IMR-90 (cell line): ENCODE measurements at regions of chr2 and their contacts with region 1.

Region 1: GRCh38 chr2:127649684-127650040 is 3.7 kb downstream of the GPR17 start:
- DNase-seq: peak; percentile 77
- ATAC-seq: peak; percentile 88
- H3K4me3 ChIP-seq: no peak overlapping the region
- H3K27ac ChIP-seq: no peak overlapping the region
- H3K4me1 ChIP-seq: peaks cover 7% of the 10 kb centered on the region; the same call in 1 of the 2 replicates
- H3K27me3 ChIP-seq: no peaks in the 10 kb centered on the region
- CTCF ChIP-seq: peak; percentile 76
- POLR2A ChIP-seq: no peak
- RAD21 ChIP-seq: peak; percentile 75

Region 2: GRCh38 chr2:127324635-127325034 is 325.0 kb before region 1 on chr2:
- CTCF ChIA-PET with region 1: no interaction called
- POLR2A ChIA-PET with region 1: no interaction called
- dilution Hi-C with region 1: no loop called
- in situ Hi-C with region 1: no loop called
- intact Hi-C with region 1: loop called (anchors 2 kb)
- DNase-seq: peak; percentile 68
- ATAC-seq: peak; percentile 28; the same call in 1 of the 2 replicates
- H3K4me3 ChIP-seq: no peak overlapping the region
- H3K27ac ChIP-seq: no peak overlapping the region
- H3K4me1 ChIP-seq: peaks cover 3% of the 10 kb centered on the region
- H3K27me3 ChIP-seq: no peaks in the 10 kb centered on the region
- CTCF ChIP-seq: peak; percentile 70
- POLR2A ChIP-seq: no peak
- RAD21 ChIP-seq: peak; percentile 71

Region 3: GRCh38 chr2:127498386-127498785 is 151.3 kb before region 1 on chr2:
- CTCF ChIA-PET with region 1: no interaction called
- POLR2A ChIA-PET with region 1: no interaction called
- dilution Hi-C with region 1: no loop called
- in situ Hi-C with region 1: no loop called
- intact Hi-C with region 1: loop called (anchors 5 kb)
- DNase-seq: peak; percentile 81
- ATAC-seq: peak; percentile 93
- H3K4me3 ChIP-seq: no peak overlapping the region
- H3K27ac ChIP-seq: peak overlapping the region; percentile 37; the same call in 1 of the 2 replicates
- H3K4me1 ChIP-seq: peaks cover 2% of the 10 kb centered on the region; the same call in 1 of the 2 replicates
- H3K27me3 ChIP-seq: no peaks in the 10 kb centered on the region
- CTCF ChIP-seq: no peak
- POLR2A ChIP-seq: no peak
- RAD21 ChIP-seq: no peak

Region 4: DNA sequence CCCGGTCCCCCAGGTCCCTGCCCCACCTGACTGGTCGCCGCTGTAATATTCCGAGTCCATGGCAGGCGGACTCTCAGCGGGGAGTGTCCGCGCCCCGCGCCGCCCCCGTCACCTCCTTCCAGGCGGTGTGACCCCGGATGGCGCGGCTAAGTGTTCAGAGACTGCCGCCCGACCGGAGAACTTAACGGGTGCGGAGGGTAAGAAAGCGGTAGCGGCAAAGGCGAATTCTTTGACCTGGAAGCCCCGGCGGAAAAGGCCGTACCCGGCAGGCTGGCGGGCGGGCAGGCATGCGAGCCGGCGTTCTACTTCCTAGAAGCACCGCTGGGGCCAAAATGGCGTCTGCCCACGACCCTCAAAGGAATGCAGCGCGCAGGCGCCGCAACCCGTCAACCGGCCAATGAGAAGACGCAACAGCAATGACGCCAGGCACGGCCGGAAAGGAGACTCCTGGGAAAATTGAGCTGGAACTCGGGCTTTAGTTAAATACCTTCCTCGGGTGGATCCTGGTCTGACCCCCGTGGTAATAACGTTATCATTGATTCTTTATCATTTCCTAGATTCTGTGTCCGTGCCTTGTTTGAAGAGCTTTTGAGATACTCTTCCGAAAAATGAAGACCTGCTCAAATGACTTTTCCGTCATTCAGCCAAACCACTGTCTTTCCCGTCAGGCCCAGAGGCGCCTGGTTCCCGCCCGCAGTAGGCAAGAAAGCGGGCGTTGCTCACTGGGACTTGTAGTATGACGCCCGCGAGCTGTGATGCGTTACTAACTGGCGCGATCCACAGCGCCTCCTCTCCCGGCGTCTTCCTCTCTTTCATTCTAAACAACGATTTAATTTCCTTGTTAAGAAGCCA is 123.3 kb before region 1 on chr2 and contains the start of gene IWS1:
- CTCF ChIA-PET with region 1: no interaction called
- POLR2A ChIA-PET with region 1: no interaction called
- dilution Hi-C with region 1: no loop called
- in situ Hi-C with region 1: no loop called
- intact Hi-C with region 1: loop called (anchors 2 kb)
- DNase-seq: peak; percentile 97
- ATAC-seq: peak; percentile 96
- H3K4me3 ChIP-seq: peak within 1 kb of the TSS; percentile 73
- H3K27ac ChIP-seq: peak within 1 kb of the TSS; percentile 92
- H3K4me1 ChIP-seq: no peaks in the 10 kb centered on the region
- H3K27me3 ChIP-seq: no peaks in the 10 kb centered on the region
- CTCF ChIP-seq: peak; percentile 27; the same call in 1 of the 2 replicates
- POLR2A ChIP-seq: peak; percentile 79
- RAD21 ChIP-seq: 0 out of 2 replicates have a peak, but pooled peaks have one; percentile 3
- total RNA-seq, gene IWS1: 50.0 and 52.5 TPM in 2 replicates

Region 5: GRCh38 chr2:127591221-127591923 is 58.3 kb before region 1 on chr2:
- CTCF ChIA-PET with region 1: interaction called, 15 read pairs
- POLR2A ChIA-PET with region 1: no interaction called
- dilution Hi-C with region 1: no loop called
- in situ Hi-C with region 1: no loop called
- intact Hi-C with region 1: loop called (anchors 1 kb)
- DNase-seq: peak; percentile 51
- ATAC-seq: peak; percentile 99
- H3K4me3 ChIP-seq: no peak overlapping the region
- H3K27ac ChIP-seq: no peak overlapping the region
- H3K4me1 ChIP-seq: no peaks in the 10 kb centered on the region
- H3K27me3 ChIP-seq: peaks cover 7% of the 10 kb centered on the region
- CTCF ChIP-seq: peak; percentile 92
- POLR2A ChIP-seq: no peak
- RAD21 ChIP-seq: peak; percentile 95

Region 6: DNA sequence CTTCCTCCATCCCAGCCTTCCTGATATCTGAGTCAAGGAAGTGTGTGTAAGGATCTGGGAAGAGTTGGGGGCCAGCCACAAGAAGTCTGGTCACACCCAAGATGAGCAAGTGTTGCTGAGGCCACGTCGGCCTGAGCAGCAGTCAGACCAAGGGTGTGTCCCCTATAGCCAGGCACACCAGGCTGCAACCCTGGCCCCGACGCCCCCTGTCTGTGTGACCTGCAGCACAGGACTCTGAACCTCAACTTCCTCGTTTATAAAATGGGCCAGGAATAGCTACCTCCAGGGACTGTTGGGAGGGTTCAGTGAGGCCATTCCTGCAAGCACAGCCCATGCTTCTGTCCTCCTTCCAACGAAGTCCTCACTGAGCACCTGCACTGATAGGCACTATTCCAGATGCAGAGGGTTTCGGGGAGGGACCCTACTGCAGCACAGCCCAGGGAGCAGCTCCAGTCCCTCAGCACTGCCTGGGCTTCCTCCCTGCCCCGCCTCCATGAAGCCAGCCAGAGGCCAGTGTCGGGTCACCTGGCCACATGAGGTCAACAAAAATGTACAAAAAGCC is 12.4 kb after region 1 on chr2:
- CTCF ChIA-PET with region 1: no interaction called
- POLR2A ChIA-PET with region 1: no interaction called
- dilution Hi-C with region 1: no loop called
- in situ Hi-C with region 1: no loop called
- intact Hi-C with region 1: loop called (anchors 1 kb)
- DNase-seq: no peak
- ATAC-seq: no peak; the same call in 1 of the 2 replicates
- H3K4me3 ChIP-seq: no peak overlapping the region
- H3K27ac ChIP-seq: no peak overlapping the region
- H3K4me1 ChIP-seq: peaks cover 14% of the 10 kb centered on the region
- H3K27me3 ChIP-seq: no peaks in the 10 kb centered on the region
- CTCF ChIP-seq: no peak
- POLR2A ChIP-seq: no peak
- RAD21 ChIP-seq: no peak